K562 (cell line): ENCODE measurements at regions of chr9 and their contacts with region 1.

Region 1: DNA sequence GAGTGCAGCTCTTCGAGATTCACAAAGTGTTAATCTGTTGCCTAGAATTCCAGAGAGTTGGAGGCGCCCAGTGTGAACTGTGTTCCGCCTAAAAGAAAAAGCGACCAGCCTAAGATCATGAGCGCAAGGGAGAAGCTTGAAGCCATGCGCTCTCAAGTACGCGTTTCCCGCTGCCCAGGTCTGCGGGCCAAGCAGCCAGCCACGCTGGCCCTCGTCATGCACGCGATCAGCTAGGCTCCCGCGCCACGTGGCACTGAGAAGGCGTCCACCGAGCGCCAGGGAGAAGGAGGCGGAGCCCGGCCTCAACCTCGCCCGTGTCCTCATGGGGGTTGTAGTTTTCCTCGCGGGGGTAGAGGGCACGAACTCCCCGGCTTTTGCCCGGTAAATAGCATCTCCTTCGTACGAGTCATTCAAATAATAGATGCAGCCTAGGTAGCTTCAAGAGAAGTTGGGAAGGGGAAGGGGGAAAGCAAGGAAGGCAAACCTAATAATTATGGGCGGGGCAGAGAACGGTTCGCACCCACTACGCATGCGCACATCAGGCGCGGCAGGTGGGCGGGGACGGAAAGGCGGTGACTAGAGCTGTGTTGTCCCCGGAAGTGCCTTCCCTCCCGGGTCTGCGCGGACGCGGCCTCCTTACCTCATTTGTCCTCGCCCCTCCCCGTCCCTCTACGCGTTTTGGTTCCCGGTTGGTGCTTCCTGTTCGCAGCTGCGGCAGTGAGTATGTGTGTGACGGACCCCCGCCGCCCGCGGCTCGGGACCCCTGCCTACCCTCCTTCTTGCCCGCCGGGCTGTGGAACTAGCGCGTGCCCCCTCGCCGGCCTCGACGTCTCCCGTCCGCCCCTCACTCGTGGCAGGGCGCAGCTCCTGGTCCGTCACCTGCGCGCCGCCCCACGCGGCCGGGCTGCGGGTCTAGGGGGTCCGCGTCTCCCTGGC is at the start of gene ZCCHC7:
- DNase-seq: peak; percentile 98 to 99 (median 99)
- ATAC-seq: peak; percentile 97
- H3K4me3 ChIP-seq: peak within 1 kb of the TSS; percentile 78
- H3K27ac ChIP-seq: peak within 1 kb of the TSS; percentile 87
- H3K4me1 ChIP-seq: peaks cover 11 to 14% of the 10 kb centered on the region in 2 experiments; a peak in 4 of 5 replicates
- H3K27me3 ChIP-seq: no peaks in the 10 kb centered on the region
- CTCF ChIP-seq: peak in 1 of 3 experiments; percentile 0; a peak in 1 of 6 replicates
- EP300 ChIP-seq: peak; percentile 30; the same call in 1 of the 2 replicates
- POLR2A ChIP-seq: peak; percentile 96
- RAD21 ChIP-seq: peak; percentile 15; a peak in 1 of 4 replicates
- polyA plus RNA-seq, gene ZCCHC7: 46.7 to 63.9 TPM

Region 2: GRCh38 chr9:36935768-36936497 is 184.2 kb before region 1 on chr9:
- CTCF ChIA-PET with region 1: no interaction called
- POLR2A ChIA-PET with region 1: no interaction called
- in situ Hi-C with region 1: no loop called
- intact Hi-C with region 1: no loop called
- DNase-seq: no peak
- ATAC-seq: no peak
- H3K4me3 ChIP-seq: no peak overlapping the region
- H3K27ac ChIP-seq: no peak overlapping the region
- H3K4me1 ChIP-seq: no peaks in the 10 kb centered on the region
- H3K27me3 ChIP-seq: peaks cover 0 to 37% of the 10 kb centered on the region in 2 experiments; a peak in 2 of 5 replicates
- CTCF ChIP-seq: no peak
- EP300 ChIP-seq: no peak
- POLR2A ChIP-seq: no peak
- RAD21 ChIP-seq: no peak

Region 3: DNA sequence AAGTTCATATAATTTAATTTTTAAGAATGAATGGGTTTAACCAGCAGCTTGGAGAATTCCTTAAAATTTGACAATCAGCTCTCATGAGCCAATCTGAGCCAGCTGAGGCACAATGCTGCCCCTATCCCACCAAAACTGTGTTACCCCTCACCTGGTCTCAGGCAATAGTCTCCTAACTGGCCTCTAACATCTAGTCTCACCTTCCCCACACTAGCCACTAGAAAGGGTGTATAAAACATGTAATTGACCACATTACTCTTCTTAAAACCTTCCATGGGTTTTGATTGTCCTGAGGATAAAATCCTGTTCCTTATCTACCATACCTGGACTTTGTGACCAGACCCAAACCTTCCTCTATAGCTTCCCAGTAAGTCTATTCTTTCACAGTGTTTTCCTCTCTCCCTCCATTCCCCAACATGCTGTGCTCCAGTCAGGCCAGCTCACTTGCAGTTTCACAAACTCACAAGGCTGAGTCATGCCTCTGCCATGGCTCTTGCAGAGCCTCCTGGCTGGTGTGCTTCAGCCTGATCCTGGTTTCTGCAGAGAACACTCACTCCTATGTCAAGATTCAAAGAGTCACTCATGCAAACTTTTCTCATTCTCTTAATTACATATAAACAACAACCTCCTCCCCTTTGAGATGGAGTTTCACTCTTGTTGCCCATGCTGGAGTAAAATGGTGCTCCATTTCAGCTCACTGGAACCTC is 15.8 kb before region 1 on chr9:
- CTCF ChIA-PET with region 1: no interaction called
- POLR2A ChIA-PET with region 1: interaction called, 26 read pairs
- in situ Hi-C with region 1: no loop called
- intact Hi-C with region 1: no loop called
- DNase-seq: peak in 3 of 4 experiments; percentile 14 to 70 (median 27)
- ATAC-seq: peak; percentile 88
- H3K4me3 ChIP-seq: no peak overlapping the region
- H3K27ac ChIP-seq: peak overlapping the region; percentile 7; the same call in 1 of the 3 replicates
- H3K4me1 ChIP-seq: peaks cover 6 to 15% of the 10 kb centered on the region in 2 experiments; a peak in 3 of 5 replicates
- H3K27me3 ChIP-seq: no peaks in the 10 kb centered on the region
- CTCF ChIP-seq: no peak
- EP300 ChIP-seq: no peak
- POLR2A ChIP-seq: no peak
- RAD21 ChIP-seq: no peak

Region 4: GRCh38 chr9:37144762-37145161 is 24.6 kb after region 1 on chr9:
- CTCF ChIA-PET with region 1: no interaction called
- POLR2A ChIA-PET with region 1: interaction called, 13 read pairs
- in situ Hi-C with region 1: no loop called
- intact Hi-C with region 1: no loop called
- DNase-seq: peak in 2 of 4 experiments; percentile 16 to 45
- ATAC-seq: peak; percentile 79
- H3K4me3 ChIP-seq: no peak overlapping the region
- H3K27ac ChIP-seq: peak overlapping the region; percentile 8; the same call in 1 of the 3 replicates
- H3K4me1 ChIP-seq: peaks cover 0 to 2% of the 10 kb centered on the region in 2 experiments; a peak in 3 of 5 replicates
- H3K27me3 ChIP-seq: no peaks in the 10 kb centered on the region
- CTCF ChIP-seq: no peak
- EP300 ChIP-seq: no peak
- POLR2A ChIP-seq: no peak
- RAD21 ChIP-seq: no peak

Region 5: GRCh38 chr9:37293664-37294524 is 173.7 kb after region 1 on chr9:
- CTCF ChIA-PET with region 1: no interaction called
- POLR2A ChIA-PET with region 1: interaction called, 6 read pairs
- in situ Hi-C with region 1: no loop called
- intact Hi-C with region 1: loop called (anchors 10 kb)
- DNase-seq: peak in 1 of 4 experiments; percentile 18
- ATAC-seq: no peak; the same call in 1 of the 3 replicates
- H3K4me3 ChIP-seq: no peak overlapping the region
- H3K27ac ChIP-seq: peak overlapping the region; percentile 4; the same call in 1 of the 3 replicates
- H3K4me1 ChIP-seq: peaks cover 0 to 33% of the 10 kb centered on the region in 2 experiments; a peak in 4 of 5 replicates
- H3K27me3 ChIP-seq: no peaks in the 10 kb centered on the region
- CTCF ChIP-seq: no peak
- EP300 ChIP-seq: no peak
- POLR2A ChIP-seq: no peak
- RAD21 ChIP-seq: no peak

Region 6: DNA sequence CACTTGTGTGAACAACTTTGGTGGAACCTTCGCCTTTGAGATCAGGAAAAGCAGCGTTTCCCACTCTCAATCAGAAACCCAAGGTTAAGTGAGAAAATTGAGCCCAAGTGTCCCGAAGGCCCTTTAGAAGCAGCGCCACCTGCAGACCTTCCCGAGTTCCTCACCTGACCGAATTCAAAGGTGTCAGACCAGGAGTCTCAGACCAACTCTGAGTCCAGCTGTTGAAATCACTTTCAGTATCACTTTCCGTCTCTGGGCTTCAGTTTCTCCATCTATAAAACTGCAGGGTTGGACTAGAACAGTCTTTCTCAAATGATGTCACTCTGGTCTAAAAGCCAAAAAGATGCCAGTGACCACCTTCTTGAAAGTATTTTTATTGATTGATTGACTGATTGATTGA is 270.6 kb after region 1 on chr9:
- CTCF ChIA-PET with region 1: no interaction called
- POLR2A ChIA-PET with region 1: no interaction called
- in situ Hi-C with region 1: no loop called
- intact Hi-C with region 1: loop called (anchors 10 kb)
- DNase-seq: peak; percentile 59 to 80 (median 66)
- ATAC-seq: peak; percentile 79
- H3K4me3 ChIP-seq: no peak overlapping the region
- H3K27ac ChIP-seq: no peak overlapping the region
- H3K4me1 ChIP-seq: peaks cover 7 to 8% of the 10 kb centered on the region in 2 experiments; a peak in 2 of 5 replicates
- H3K27me3 ChIP-seq: 0 out of 5 replicates have a peak, but pooled peaks cover 0 to 4% of the 10 kb centered on the region in 2 experiments
- CTCF ChIP-seq: peak; percentile 82 to 84 (median 83)
- EP300 ChIP-seq: no peak
- POLR2A ChIP-seq: no peak
- RAD21 ChIP-seq: peak; percentile 40 to 76; a peak in 3 of 4 replicates